Activated CD4-positive, alpha-beta T cell treated with anti-CD3 and anti-CD28 coated beads for 36 hours (primary cell): ENCODE measurements at regions of chr4 and their contacts with region 1.

Region 1: GRCh38 chr4:122732329-122733026 is at the start of gene BBS12:
- DNase-seq: peak; percentile 99
- ATAC-seq: peak; percentile 100
- H3K4me3 Mint-ChIP-seq: peak within 1 kb of the TSS; percentile 96
- H3K27ac Mint-ChIP-seq: peak within 1 kb of the TSS; percentile 88
- H3K4me1 Mint-ChIP-seq: peaks cover 26% of the 10 kb centered on the region
- H3K27me3 Mint-ChIP-seq: no peaks in the 10 kb centered on the region
- total RNA-seq, gene BBS12: 2.8 to 3.9 TPM

Region 2: DNA sequence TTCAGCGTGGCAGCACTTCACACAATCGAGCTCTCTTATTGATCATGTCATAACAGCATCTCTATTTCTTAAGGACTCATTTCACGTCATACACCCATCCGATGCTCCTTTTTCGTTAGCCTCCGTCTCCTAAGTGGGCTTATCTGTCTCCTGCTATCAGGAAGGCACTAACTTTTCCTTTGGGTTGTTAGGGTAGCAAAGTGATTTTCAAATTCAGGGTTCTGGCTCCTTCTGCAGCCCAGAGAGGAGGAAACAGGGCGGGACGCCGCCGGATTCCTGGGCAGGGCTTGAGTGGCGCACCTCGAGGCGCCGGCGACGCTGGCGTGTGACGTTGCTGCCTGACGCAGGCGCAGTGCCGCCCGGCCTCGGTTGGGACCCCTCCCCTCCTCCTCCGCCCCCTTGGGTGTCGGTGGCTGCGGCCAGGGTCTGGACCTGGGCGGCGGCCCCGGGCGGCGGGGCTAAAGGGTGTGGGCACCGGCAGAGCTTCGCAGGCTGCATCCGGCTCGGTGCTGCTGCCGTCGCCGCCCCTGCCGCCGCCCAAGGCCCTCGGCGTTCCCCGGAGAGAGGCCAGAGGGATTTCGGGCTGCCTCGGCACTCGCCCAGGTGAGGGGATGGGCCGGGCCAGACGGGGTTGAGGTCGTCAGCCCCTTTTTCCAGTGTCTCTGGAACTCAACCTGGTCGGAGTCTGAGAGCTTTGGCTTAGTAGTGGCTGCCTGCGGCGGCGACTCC is 580.3 kb before region 1 on chr4 and contains the start of gene BLTP1:
- CTCF ChIA-PET with region 1: no interaction called
- POLR2A ChIA-PET with region 1: no interaction called
- intact Hi-C with region 1: loop called in 1 of 2 experiments (anchors 5 kb)
- DNase-seq: peak; percentile 93
- ATAC-seq: peak; percentile 91
- H3K4me3 Mint-ChIP-seq: peak within 1 kb of the TSS; percentile 85
- H3K27ac Mint-ChIP-seq: peak within 1 kb of the TSS; percentile 98
- H3K4me1 Mint-ChIP-seq: peaks cover 50% of the 10 kb centered on the region
- H3K27me3 Mint-ChIP-seq: no peaks in the 10 kb centered on the region
- total RNA-seq, gene BLTP1: 16.5 to 20.1 TPM

Region 3: GRCh38 chr4:122602277-122603142 is 130.0 kb before region 1 on chr4:
- CTCF ChIA-PET with region 1: interaction called, 22 read pairs
- POLR2A ChIA-PET with region 1: no interaction called
- intact Hi-C with region 1: loop called (anchors 1 kb)
- DNase-seq: peak; percentile 40
- ATAC-seq: peak; percentile 89
- H3K4me3 Mint-ChIP-seq: peak overlapping the region; percentile 54
- H3K27ac Mint-ChIP-seq: peak overlapping the region; percentile 59
- H3K4me1 Mint-ChIP-seq: peaks cover 30% of the 10 kb centered on the region
- H3K27me3 Mint-ChIP-seq: peaks cover 3% of the 10 kb centered on the region

Region 4: DNA sequence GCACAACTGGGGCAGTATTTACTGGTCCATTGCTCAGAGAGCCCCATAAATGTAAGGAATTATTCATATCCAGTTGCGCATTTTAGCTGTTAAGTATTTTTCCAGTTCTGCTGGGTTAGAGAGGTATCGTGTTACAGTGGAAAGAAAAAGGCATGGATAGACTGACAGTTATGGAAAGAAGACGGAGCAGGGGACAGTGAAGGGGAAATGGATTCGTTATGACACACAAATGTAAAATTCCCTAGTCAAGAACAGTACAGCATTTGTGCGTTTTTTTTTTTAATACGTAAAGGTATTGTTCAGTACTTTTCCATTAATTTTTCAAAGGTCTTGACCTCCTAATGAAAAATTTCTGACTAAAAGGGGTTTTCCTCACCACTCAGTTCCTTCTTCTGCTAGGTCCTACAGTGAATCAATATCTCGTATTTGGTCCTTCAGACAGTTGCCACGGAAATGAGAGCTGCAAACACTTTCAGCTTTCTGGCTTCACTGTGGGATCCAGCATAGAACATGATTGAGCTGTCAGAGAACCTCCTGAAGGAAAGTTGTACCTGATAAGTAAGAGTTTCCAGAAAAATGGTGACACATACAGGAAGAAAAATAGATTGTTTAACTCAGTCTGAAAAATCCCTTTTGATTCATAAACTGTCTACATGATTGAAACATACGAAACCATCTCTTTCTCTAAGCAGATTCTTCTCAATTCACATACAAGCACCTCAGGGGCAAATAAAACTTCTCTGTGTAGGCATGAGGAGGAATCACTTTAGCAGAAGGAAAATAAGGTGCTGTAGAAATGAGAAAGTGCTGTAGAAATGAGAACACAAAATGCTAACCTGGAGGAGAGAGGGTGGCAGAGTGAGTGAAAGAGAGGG is 21.8 kb before region 1 on chr4:
- CTCF ChIA-PET with region 1: interaction called, 10 read pairs
- POLR2A ChIA-PET with region 1: interaction called, 3 read pairs
- intact Hi-C with region 1: loop called in 1 of 2 experiments (anchors 1 kb)
- DNase-seq: peak; percentile 72
- ATAC-seq: peak; percentile 91
- H3K4me3 Mint-ChIP-seq: peak overlapping the region; percentile 56
- H3K27ac Mint-ChIP-seq: peak overlapping the region; percentile 97
- H3K4me1 Mint-ChIP-seq: peaks cover 79% of the 10 kb centered on the region
- H3K27me3 Mint-ChIP-seq: no peaks in the 10 kb centered on the region

Region 5: DNA sequence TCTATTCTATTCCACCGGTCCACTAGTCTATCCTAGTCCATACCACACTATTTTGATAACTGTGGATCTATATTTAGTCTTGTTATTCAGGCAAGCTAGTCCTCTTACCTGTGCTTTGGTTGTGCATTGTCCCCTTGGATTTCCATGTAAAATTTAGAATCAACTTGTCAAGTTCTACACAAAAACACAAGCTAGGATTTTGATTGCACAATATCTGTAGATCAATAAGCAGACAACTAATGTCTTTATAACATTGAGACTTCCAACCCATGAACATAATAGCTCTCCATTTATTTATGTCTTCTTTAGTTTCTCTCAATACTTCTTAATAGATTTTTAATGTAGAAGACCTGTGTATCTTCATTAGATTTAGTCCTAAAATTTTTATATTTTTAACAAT is 10.2 kb before region 1 on chr4:
- CTCF ChIA-PET with region 1: interaction called, 37 read pairs
- POLR2A ChIA-PET with region 1: interaction called, 4 read pairs
- intact Hi-C with region 1: loop called in 1 of 2 experiments (anchors 2 kb)
- DNase-seq: no peak
- ATAC-seq: no peak
- H3K4me3 Mint-ChIP-seq: no peak overlapping the region
- H3K27ac Mint-ChIP-seq: no peak overlapping the region
- H3K4me1 Mint-ChIP-seq: peaks cover 3% of the 10 kb centered on the region
- H3K27me3 Mint-ChIP-seq: peaks cover 8% of the 10 kb centered on the region

Region 6: DNA sequence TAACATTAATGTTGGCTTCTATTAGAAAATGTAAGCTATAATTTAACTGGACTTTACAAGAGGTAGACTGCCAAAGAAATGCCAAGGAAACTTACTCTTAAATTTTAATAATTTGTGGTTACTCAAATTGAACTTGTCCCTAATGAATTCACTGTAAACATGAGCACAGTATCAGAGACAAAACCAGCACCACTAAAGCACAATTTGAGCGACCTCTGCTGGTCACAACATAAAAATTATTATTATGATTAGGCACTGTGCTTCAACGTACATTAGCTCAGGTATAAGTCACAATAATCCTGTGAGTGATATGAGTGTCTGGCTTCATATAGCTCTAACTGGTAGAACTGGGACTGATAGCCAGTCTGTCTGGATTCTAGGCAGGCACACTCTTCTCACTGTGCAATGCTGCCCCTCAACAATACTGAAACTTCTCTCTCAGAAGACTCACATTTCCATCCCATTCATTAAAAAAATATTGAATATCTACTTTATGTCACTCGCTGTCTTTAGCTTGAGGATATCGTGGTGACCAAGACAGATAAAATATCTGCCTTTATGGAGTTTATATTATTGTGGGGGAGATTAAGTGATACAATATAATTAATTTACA is 181.9 kb after region 1 on chr4:
- CTCF ChIA-PET with region 1: interaction called, 11 read pairs
- POLR2A ChIA-PET with region 1: no interaction called
- intact Hi-C with region 1: no loop called
- DNase-seq: peak; percentile 51
- ATAC-seq: peak; percentile 85
- H3K4me3 Mint-ChIP-seq: no peak overlapping the region
- H3K27ac Mint-ChIP-seq: no peak overlapping the region
- H3K4me1 Mint-ChIP-seq: no peaks in the 10 kb centered on the region
- H3K27me3 Mint-ChIP-seq: no peaks in the 10 kb centered on the region

Region 7: GRCh38 chr4:123838474-123838873 is 1106.0 kb after region 1 on chr4:
- CTCF ChIA-PET with region 1: no interaction called
- POLR2A ChIA-PET with region 1: no interaction called
- intact Hi-C with region 1: no loop called
- DNase-seq: no peak
- ATAC-seq: no peak
- H3K4me3 Mint-ChIP-seq: no peak overlapping the region
- H3K27ac Mint-ChIP-seq: no peak overlapping the region
- H3K4me1 Mint-ChIP-seq: no peaks in the 10 kb centered on the region
- H3K27me3 Mint-ChIP-seq: no peaks in the 10 kb centered on the region